ENCODE measurements at regions of chr11 and their contacts with region 1.

Region 1: DNA sequence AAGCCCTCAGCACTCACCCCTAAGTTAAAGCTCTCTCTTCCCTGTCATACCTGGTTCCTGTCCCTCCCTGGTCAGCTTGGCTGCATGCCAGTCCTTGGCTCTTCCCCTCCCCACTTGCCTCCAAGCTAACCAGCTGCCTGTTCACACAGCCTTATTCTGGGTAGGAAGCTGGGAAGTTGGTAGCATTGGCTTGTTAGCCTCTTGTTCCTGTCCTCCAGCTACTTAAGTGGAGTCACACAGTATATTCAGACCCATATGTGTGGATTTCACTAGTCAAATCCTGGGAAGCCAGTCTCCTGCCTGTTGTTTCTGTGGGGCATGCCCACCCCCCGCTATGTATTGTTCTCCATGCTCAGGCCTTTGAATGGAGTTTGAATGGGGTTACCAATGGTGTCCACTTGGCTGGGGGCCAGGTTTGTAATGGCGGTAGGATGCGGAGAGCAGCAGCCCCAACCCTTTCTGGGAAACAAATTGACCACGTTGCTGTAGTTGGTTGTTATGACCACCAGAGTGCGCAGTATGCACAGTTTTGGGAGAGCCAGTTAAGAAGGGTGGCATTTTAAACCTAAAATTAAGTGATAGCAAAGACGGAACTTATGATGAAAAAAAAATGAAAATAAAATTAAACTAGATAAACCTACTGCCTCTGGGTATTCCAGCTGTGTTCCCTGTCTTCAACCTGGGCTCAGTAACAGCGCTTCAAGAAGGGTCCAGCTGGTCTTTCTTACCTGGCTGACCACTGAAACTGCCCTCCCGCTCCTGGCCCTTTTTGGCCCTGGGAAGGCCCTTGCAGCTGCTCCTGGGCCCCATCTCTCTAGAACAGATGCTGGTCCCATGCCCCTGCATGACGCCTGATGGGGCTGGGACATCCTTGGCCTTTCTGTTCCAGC is 10.7 kb upstream of the RPS3 start:
- DNase-seq: peak; percentile 83
- ATAC-seq: peak; percentile 83
- H3K4me3 Mint-ChIP-seq: no peak overlapping the region
- H3K27ac Mint-ChIP-seq: no peak overlapping the region
- H3K4me1 Mint-ChIP-seq: peaks cover 12% of the 10 kb centered on the region
- H3K27me3 Mint-ChIP-seq: peaks cover 14% of the 10 kb centered on the region

Region 2: DNA sequence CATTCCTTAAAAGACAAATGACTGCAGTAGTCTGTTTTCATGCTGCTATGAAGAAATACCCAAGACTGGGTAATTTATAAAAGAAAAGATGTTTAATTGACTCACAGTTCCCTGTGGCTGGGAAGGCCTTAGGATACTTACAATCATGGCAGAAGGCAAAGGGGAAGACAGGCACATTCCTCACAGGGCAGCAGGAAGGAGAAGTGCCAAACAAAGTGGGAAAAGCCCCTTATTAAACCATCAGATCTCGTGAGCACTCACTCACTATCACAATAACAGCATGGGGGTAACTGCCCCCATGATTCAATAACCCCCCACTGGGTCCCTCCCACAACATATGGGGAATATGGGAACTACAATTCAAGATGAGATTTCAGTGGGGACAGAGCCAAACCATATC is 275.6 kb before region 1 on chr11:
- CTCF ChIA-PET with region 1: no interaction called
- POLR2A ChIA-PET with region 1: no interaction called
- DNase-seq: no peak
- ATAC-seq: no peak
- H3K4me3 Mint-ChIP-seq: no peak overlapping the region
- H3K27ac Mint-ChIP-seq: no peak overlapping the region
- H3K4me1 Mint-ChIP-seq: no peaks in the 10 kb centered on the region
- H3K27me3 Mint-ChIP-seq: peaks cover 17% of the 10 kb centered on the region

Region 3: DNA sequence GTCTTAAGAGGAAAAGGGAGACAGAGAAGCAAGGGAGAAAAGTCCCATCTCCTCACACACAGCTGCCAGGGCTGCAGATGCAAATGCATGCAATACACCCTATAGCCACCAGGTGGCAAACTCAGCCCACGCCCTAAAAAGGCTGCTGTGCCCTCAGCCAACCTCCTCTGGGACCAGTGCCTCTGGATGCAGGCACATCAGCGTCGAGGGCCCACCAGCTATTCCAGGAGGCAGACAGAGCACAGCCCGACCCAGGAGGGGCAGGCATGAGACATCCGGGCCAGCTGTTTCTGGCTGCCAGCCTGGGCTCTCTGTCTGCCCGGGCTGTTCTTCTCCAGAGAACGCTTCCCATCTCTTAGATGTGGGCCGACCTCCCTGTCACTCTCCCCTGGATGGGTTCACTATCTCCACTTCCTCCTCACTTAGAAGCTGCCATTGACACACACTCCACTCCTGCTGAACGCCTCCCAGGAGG is 108.4 kb before region 1 on chr11:
- CTCF ChIA-PET with region 1: interaction called, 401 read pairs
- POLR2A ChIA-PET with region 1: interaction called, 7 read pairs
- DNase-seq: peak; percentile 85
- ATAC-seq: peak; percentile 62
- H3K4me3 Mint-ChIP-seq: no peak overlapping the region
- H3K27ac Mint-ChIP-seq: peak overlapping the region; percentile 69
- H3K4me1 Mint-ChIP-seq: peaks cover 31% of the 10 kb centered on the region
- H3K27me3 Mint-ChIP-seq: no peaks in the 10 kb centered on the region

Region 4: GRCh38 chr11:75342903-75343870 is 45.4 kb before region 1 on chr11:
- CTCF ChIA-PET with region 1: interaction called, 110 read pairs
- POLR2A ChIA-PET with region 1: no interaction called
- DNase-seq: no peak
- ATAC-seq: no peak
- H3K4me3 Mint-ChIP-seq: no peak overlapping the region
- H3K27ac Mint-ChIP-seq: peak overlapping the region; percentile 73
- H3K4me1 Mint-ChIP-seq: peaks cover 99% of the 10 kb centered on the region
- H3K27me3 Mint-ChIP-seq: no peaks in the 10 kb centered on the region

Region 5: GRCh38 chr11:75371941-75372789 is 16.5 kb before region 1 on chr11:
- CTCF ChIA-PET with region 1: interaction called, 14 read pairs
- POLR2A ChIA-PET with region 1: no interaction called
- DNase-seq: no peak
- ATAC-seq: no peak
- H3K4me3 Mint-ChIP-seq: no peak overlapping the region
- H3K27ac Mint-ChIP-seq: no peak overlapping the region
- H3K4me1 Mint-ChIP-seq: peaks cover 43% of the 10 kb centered on the region
- H3K27me3 Mint-ChIP-seq: no peaks in the 10 kb centered on the region

Region 6: GRCh38 chr11:75406338-75406777 is 17.7 kb after region 1 on chr11:
- CTCF ChIA-PET with region 1: interaction called, 21 read pairs
- POLR2A ChIA-PET with region 1: interaction called, 4 read pairs
- DNase-seq: no peak
- ATAC-seq: no peak
- H3K4me3 Mint-ChIP-seq: no peak overlapping the region
- H3K27ac Mint-ChIP-seq: no peak overlapping the region
- H3K4me1 Mint-ChIP-seq: peaks cover 41% of the 10 kb centered on the region
- H3K27me3 Mint-ChIP-seq: no peaks in the 10 kb centered on the region

Region 7: GRCh38 chr11:75437966-75438659 is 49.5 kb after region 1 on chr11:
- CTCF ChIA-PET with region 1: no interaction called
- POLR2A ChIA-PET with region 1: no interaction called
- DNase-seq: no peak
- ATAC-seq: no peak
- H3K4me3 Mint-ChIP-seq: no peak overlapping the region
- H3K27ac Mint-ChIP-seq: no peak overlapping the region
- H3K4me1 Mint-ChIP-seq: no peaks in the 10 kb centered on the region
- H3K27me3 Mint-ChIP-seq: peaks cover 5% of the 10 kb centered on the region

Region 8: GRCh38 chr11:75532200-75533048 is 143.8 kb after region 1 on chr11:
- CTCF ChIA-PET with region 1: interaction called, 67 read pairs
- POLR2A ChIA-PET with region 1: interaction called, 3 read pairs
- DNase-seq: peak; percentile 90
- ATAC-seq: peak; percentile 85
- H3K4me3 Mint-ChIP-seq: peak overlapping the region; percentile 1
- H3K27ac Mint-ChIP-seq: peak overlapping the region; percentile 61
- H3K4me1 Mint-ChIP-seq: peaks cover 59% of the 10 kb centered on the region
- H3K27me3 Mint-ChIP-seq: peaks cover 9% of the 10 kb centered on the region

Measured in activated CD8-positive, alpha-beta T cell treated with anti-CD3 and anti-CD28 coated beads, Interleukin-2, amount 10 ng/mL, durations not matched to agents 7 days and 5 days (primary cell).